CD14-positive monocyte (primary cell): ENCODE measurements at regions of chr1 and their contacts with region 1.

Region 1: DNA sequence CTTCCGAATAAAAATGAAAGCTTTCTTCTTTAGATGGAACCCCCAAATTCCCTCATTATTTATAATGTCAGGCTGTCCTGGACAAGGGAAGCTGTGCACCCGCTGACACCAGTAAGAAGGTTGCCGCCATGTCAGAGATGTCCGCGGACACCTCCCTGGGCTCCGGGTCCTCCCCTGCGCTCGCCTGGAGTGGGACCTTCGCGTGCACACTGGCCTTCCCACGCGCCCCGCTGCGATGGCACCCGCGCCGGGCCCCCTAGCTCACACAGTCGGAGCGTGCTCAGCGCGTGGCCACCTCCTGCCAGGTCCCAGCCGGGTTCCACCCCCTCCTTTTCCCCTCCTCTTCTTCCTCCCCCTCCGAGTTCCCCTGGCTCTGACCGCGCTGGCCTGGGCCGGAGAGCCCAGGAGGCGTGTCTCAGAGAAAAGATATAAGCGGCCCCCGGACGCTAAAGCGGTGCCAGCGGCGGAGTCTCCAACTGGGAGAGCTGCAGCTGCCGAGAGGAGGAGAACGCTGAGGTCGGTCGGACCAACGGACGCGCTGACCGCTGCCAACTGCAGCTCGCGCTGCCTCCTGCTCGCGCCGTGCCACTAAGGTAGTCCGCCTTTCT is at the start of gene G0S2:
- DNase-seq: peak; percentile 60 to 91 (median 88)
- H3K4me3 ChIP-seq: peak within 1 kb of the TSS; percentile 38 to 80 (median 46)
- H3K4me3 Mint-ChIP-seq: peak within 1 kb of the TSS; percentile 94 to 96
- H3K27ac ChIP-seq: peak within 1 kb of the TSS; percentile 18 to 90
- H3K27ac Mint-ChIP-seq: peak within 1 kb of the TSS; percentile 92 to 98 (median 96)
- H3K4me1 ChIP-seq: peaks cover 48 to 51% of the 10 kb centered on the region in 2 donors
- H3K4me1 Mint-ChIP-seq: peaks cover 73% of the 10 kb centered on the region
- H3K27me3 ChIP-seq: peaks cover 36 to 52% of the 10 kb centered on the region in 2 donors
- H3K27me3 Mint-ChIP-seq: peaks cover 56 to 57% (median 57%) of the 10 kb centered on the region in 3 donors
- CTCF ChIP-seq: no peak
- polyA plus RNA-seq, gene G0S2: 176 to 1,583 (median 373) TPM

Region 2: DNA sequence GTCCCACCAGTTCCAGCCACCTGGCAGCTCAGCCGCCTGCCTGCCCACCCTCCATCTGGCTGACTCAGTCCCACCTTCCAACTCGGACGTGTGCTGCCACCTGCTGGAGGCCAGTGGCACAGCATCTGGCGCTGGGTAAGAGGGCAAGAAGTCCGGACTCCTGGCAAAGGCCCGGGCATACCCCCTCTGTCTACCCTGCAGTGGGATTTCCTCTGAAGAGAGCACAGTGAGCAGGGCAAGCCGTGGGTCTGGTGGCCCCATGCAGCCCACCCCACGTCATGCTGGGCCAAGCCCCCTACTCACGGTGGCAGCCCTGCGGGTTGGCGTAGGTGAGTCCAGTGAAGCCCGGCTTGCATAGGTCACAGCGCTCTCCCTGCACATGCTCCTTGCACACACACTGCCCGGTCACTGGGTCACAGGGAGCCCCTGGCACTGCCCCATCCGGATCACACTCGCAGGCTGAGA is 47.3 kb before region 1 on chr1:
- intact Hi-C with region 1: loop called in 1 of 2 experiments (anchors 10 kb)
- DNase-seq: peak; percentile 58 to 80 (median 69)
- H3K4me3 ChIP-seq: no peak overlapping the region
- H3K4me3 Mint-ChIP-seq: peak overlapping the region in 1 of 2 donors; percentile 59
- H3K27ac ChIP-seq: no peak overlapping the region
- H3K27ac Mint-ChIP-seq: peak overlapping the region in 5 of 7 donors; percentile 72 to 86 (median 84)
- H3K4me1 ChIP-seq: peaks cover 20% of the 10 kb centered on the region in 2 donors
- H3K4me1 Mint-ChIP-seq: peaks cover 27% of the 10 kb centered on the region
- H3K27me3 ChIP-seq: peaks cover 0 to 15% of the 10 kb centered on the region in 2 donors
- H3K27me3 Mint-ChIP-seq: peaks cover 18 to 40% (median 33%) of the 10 kb centered on the region in 3 donors
- CTCF ChIP-seq: peak; percentile 99

Region 3: DNA sequence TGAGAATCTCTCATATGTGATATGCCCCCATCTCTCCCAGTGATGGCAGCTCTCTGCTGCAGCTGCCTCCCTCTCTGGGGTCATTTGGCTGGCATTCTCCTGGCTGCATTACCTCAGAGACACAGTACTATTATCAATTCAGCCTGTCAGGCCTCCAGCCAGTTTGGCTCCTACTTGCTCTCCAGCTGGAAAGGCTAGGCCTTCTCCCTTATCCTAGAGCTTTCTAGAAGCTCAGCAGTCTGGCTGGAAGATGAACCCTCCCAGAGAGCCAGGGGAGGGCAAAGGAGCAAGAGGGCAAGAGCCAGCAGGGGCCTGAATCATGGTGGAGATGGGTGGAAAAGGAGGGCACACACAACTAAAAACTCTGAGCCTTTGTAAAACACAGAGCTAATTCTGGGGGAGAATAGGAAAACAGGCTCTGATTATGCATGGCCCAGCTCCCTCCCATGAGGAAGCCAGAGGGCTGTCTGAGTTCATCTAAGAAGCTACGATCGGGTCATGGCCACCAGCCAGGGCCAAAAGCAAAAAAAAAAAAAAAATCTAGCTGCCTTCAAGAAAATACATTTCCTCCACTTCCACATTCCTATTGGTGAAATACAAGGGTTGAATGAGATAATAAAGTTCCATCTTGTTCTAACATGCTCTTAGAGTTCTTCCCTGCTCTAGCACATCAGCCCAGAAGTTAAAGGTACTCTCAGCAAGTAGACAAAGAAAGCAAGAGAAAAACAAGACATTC is 31.6 kb before region 1 on chr1:
- intact Hi-C with region 1: loop called in 1 of 2 experiments (anchors 5 kb)
- DNase-seq: no peak
- H3K4me3 ChIP-seq: no peak overlapping the region
- H3K4me3 Mint-ChIP-seq: no peak overlapping the region
- H3K27ac ChIP-seq: no peak overlapping the region
- H3K27ac Mint-ChIP-seq: peak overlapping the region in 1 of 7 donors; percentile 14
- H3K4me1 ChIP-seq: peaks cover 17 to 18% of the 10 kb centered on the region in 2 donors
- H3K4me1 Mint-ChIP-seq: peaks cover 26% of the 10 kb centered on the region
- H3K27me3 ChIP-seq: peaks cover 3 to 16% of the 10 kb centered on the region in 2 donors
- H3K27me3 Mint-ChIP-seq: peaks cover 21 to 32% (median 26%) of the 10 kb centered on the region in 3 donors
- CTCF ChIP-seq: no peak

Region 4: GRCh38 chr1:209659909-209660308 is 15.2 kb before region 1 on chr1:
- intact Hi-C with region 1: loop called (anchors 1 to 2 kb)
- DNase-seq: peak; percentile 93 to 99 (median 96)
- H3K4me3 ChIP-seq: peak overlapping the region in 1 of 3 experiments; percentile 44
- H3K4me3 Mint-ChIP-seq: peak overlapping the region; percentile 33 to 82
- H3K27ac ChIP-seq: peak overlapping the region in 1 of 2 donors; percentile 74
- H3K27ac Mint-ChIP-seq: peak overlapping the region; percentile 90 to 98 (median 97)
- H3K4me1 ChIP-seq: peaks cover 48 to 52% of the 10 kb centered on the region in 2 donors
- H3K4me1 Mint-ChIP-seq: peaks cover 68% of the 10 kb centered on the region
- H3K27me3 ChIP-seq: peaks cover 22 to 50% of the 10 kb centered on the region in 2 donors
- H3K27me3 Mint-ChIP-seq: peaks cover 35 to 69% (median 48%) of the 10 kb centered on the region in 3 donors
- CTCF ChIP-seq: no peak

Region 5: GRCh38 chr1:209769171-209769904 is 94.3 kb after region 1 on chr1:
- intact Hi-C with region 1: loop called in 1 of 2 experiments (anchors 5 kb)
- DNase-seq: peak; percentile 77 to 90 (median 85)
- H3K4me3 ChIP-seq: peak overlapping the region; percentile 48 to 82 (median 55)
- H3K4me3 Mint-ChIP-seq: no peak overlapping the region
- H3K27ac ChIP-seq: peak overlapping the region; percentile 93 to 96
- H3K27ac Mint-ChIP-seq: no peak overlapping the region
- H3K4me1 ChIP-seq: peaks cover 70 to 91% of the 10 kb centered on the region in 2 donors
- H3K4me1 Mint-ChIP-seq: peaks cover 51% of the 10 kb centered on the region
- H3K27me3 ChIP-seq: no peaks in the 10 kb centered on the region
- H3K27me3 Mint-ChIP-seq: no peaks in the 10 kb centered on the region
- CTCF ChIP-seq: no peak

Region 6: GRCh38 chr1:209784265-209785169 is 109.5 kb after region 1 on chr1 and contains the start of gene C1orf74:
- intact Hi-C with region 1: no loop called
- DNase-seq: peak; percentile 98 to 99 (median 99)
- H3K4me3 ChIP-seq: peak within 1 kb of the TSS; percentile 67 to 93 (median 85)
- H3K4me3 Mint-ChIP-seq: peak within 1 kb of the TSS; percentile 90 to 97
- H3K27ac ChIP-seq: peak within 1 kb of the TSS; percentile 70 to 95
- H3K27ac Mint-ChIP-seq: peak within 1 kb of the TSS; percentile 96 to 99 (median 98)
- H3K4me1 ChIP-seq: peaks cover 14 to 21% of the 10 kb centered on the region in 2 donors
- H3K4me1 Mint-ChIP-seq: peaks cover 23% of the 10 kb centered on the region
- H3K27me3 ChIP-seq: peaks cover 0 to 8% of the 10 kb centered on the region in 2 donors
- H3K27me3 Mint-ChIP-seq: peaks cover 8 to 13% (median 12%) of the 10 kb centered on the region in 3 donors
- CTCF ChIP-seq: no peak
- polyA plus RNA-seq, gene C1orf74: 0.07 to 0.47 (median 0.19) TPM